Natural killer cell (primary cell): ENCODE measurements at regions of chr3 and their contacts with region 1.

Region 1: GRCh38 chr3:113287803-113288648 is 76.7 kb downstream of the BOC start:
- DNase-seq: peak in 1 of 2 donors; percentile 74
- ATAC-seq: peak in 2 of 3 donors; percentile 71 to 76
- H3K4me3 ChIP-seq: no peak overlapping the region
- H3K4me3 Mint-ChIP-seq: no peak overlapping the region
- H3K27ac ChIP-seq: no peak overlapping the region
- H3K27ac Mint-ChIP-seq: no peak overlapping the region
- H3K4me1 ChIP-seq: no peaks in the 10 kb centered on the region
- H3K4me1 Mint-ChIP-seq: no peaks in the 10 kb centered on the region
- H3K27me3 ChIP-seq: no peaks in the 10 kb centered on the region
- H3K27me3 Mint-ChIP-seq: no peaks in the 10 kb centered on the region
- CTCF ChIP-seq: peak; percentile 99

Region 2: DNA sequence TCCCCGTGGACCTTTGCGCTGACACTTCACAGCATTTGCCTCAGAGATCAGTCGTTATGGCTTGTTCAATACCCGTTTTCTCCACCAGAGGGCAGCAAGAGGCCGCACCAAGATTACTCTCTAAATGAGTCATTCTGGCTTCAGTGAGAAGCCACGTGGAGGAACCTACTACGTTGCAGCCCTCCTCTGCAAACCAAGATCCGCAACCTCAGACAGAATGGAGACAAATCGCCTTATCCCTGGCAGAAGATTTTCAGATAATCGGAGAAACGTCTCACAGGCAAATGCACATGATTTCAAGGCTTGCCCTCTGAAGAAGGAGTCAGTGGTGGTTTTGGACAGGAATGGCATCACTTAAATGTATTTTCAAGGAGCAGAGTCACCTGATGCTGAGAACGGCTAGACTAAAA is 236.7 kb before region 1 on chr3:
- intact Hi-C with region 1: loop called (anchors 1 kb)
- DNase-seq: peak; percentile 81 to 88
- ATAC-seq: peak; percentile 99 to 100 (median 100)
- H3K4me3 ChIP-seq: no peak overlapping the region
- H3K4me3 Mint-ChIP-seq: no peak overlapping the region
- H3K27ac ChIP-seq: no peak overlapping the region
- H3K27ac Mint-ChIP-seq: no peak overlapping the region
- H3K4me1 ChIP-seq: peaks cover 6% of the 10 kb centered on the region
- H3K4me1 Mint-ChIP-seq: peaks cover 0 to 4% of the 10 kb centered on the region in 2 donors
- H3K27me3 ChIP-seq: no peaks in the 10 kb centered on the region
- H3K27me3 Mint-ChIP-seq: no peaks in the 10 kb centered on the region
- CTCF ChIP-seq: peak; percentile 89